ENCODE measurements at regions of chr12 and their contacts with region 1.

Region 1: GRCh38 chr12:104230304-104231095 is 14.9 kb downstream of the TXNRD1 start:
- DNase-seq: no peak
- ATAC-seq: no peak
- H3K4me3 ChIP-seq: no peak overlapping the region
- H3K4me3 Mint-ChIP-seq: no peak overlapping the region
- H3K27ac ChIP-seq: no peak overlapping the region
- H3K27ac Mint-ChIP-seq: no peak overlapping the region
- H3K4me1 ChIP-seq: no peaks in the 10 kb centered on the region
- H3K4me1 Mint-ChIP-seq: no peaks in the 10 kb centered on the region
- H3K27me3 ChIP-seq: peaks cover 0 to 8% of the 10 kb centered on the region in 2 experiments
- H3K27me3 Mint-ChIP-seq: peaks cover 0 to 3% of the 10 kb centered on the region in 2 donors

Region 2: GRCh38 chr12:105822131-105823105 is 1591.9 kb after region 1 on chr12:
- CTCF ChIA-PET with region 1: no interaction called
- POLR2A ChIA-PET with region 1: interaction called in 1 of 2 experiments, 10 read pairs
- DNase-seq: no peak
- ATAC-seq: no peak
- H3K4me3 ChIP-seq: no peak overlapping the region
- H3K4me3 Mint-ChIP-seq: no peak overlapping the region
- H3K27ac ChIP-seq: no peak overlapping the region
- H3K27ac Mint-ChIP-seq: no peak overlapping the region
- H3K4me1 ChIP-seq: no peaks in the 10 kb centered on the region
- H3K4me1 Mint-ChIP-seq: no peaks in the 10 kb centered on the region
- H3K27me3 ChIP-seq: no peaks in the 10 kb centered on the region
- H3K27me3 Mint-ChIP-seq: peaks cover 0 to 2% of the 10 kb centered on the region in 2 donors